Mammary epithelial cell (primary cell): ENCODE measurements at regions of chr10 and their contacts with region 1.

Region 1: DNA sequence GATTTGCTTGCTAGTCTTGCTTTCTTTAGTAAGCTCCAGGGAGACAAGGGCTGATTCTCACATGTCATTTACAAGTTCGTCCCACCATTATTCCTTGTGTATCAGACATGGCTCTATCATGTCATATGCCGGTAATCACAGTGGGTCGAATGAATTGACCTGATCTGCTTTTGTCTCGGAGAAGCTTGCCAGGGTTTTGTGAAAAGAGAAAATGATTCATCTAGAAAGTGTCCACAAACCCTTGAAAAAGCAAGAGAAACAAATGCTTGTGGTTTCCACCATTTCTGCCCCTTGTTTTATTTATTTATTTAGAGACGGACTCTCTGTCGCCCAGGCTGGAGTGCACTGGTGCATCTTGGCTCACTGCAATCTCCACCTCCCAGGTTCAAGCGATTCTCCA is 278.5 kb downstream of the TCF7L2 start:
- DNase-seq: no peak
- H3K4me3 ChIP-seq: no peak overlapping the region
- H3K27ac ChIP-seq: no peak overlapping the region
- H3K4me1 ChIP-seq: no peaks in the 10 kb centered on the region
- H3K27me3 ChIP-seq: no peaks in the 10 kb centered on the region
- CTCF ChIP-seq: no peak

Region 2: DNA sequence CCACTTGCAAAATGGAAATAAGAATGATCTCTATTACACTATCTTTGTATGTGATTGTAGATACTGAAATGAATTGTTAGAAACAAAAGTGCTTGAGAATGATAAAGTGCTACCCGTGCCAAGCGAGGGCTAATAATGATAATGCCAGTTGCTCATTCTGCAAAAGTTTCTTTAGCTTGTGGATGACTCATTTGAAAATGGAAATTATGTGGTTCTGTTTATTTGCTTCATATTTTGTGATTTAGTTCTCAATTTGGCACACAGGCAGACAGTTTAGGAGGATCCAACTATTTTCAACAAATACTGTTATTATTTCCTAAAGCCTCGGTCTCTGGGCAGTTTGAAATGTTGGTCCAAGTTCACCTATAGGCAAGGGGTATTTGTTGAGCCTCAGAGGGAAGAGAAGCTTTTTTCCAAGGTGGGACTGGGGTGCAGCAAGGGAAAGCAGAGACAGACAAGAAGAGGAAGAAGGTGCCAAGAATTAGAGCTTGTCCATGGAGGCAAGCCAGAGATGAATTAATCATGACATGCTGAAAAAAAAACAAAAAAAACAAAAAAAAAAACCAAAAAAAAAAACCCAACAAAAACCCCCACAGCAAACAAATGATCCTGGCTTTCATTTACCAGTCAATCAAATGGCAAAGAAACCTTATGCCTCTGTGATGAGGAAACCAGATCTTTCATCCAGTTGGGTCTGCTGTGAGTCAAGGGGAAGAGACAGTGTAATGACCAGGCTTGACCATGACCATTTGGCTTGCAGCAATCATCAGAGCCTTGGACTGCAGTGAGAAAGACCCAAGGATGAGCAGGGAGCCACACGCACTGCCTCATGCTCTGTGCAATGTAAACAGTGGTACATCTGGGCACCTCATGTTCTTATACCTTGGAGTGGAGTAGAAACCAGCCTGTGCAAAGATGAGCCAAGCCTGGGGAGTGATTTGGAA is 39.4 kb after region 1 on chr10:
- CTCF ChIA-PET with region 1: no interaction called
- dilution Hi-C with region 1: no loop called
- in situ Hi-C with region 1: no loop called
- intact Hi-C with region 1: no loop called
- DNase-seq: no peak
- H3K4me3 ChIP-seq: no peak overlapping the region
- H3K27ac ChIP-seq: no peak overlapping the region
- H3K4me1 ChIP-seq: no peaks in the 10 kb centered on the region
- H3K27me3 ChIP-seq: peaks cover 4% of the 10 kb centered on the region
- CTCF ChIP-seq: no peak

Region 3: GRCh38 chr10:113285305-113285704 is 56.8 kb after region 1 on chr10:
- CTCF ChIA-PET with region 1: no interaction called
- dilution Hi-C with region 1: loop called (anchors 5 kb)
- in situ Hi-C with region 1: no loop called
- intact Hi-C with region 1: no loop called
- DNase-seq: no peak
- H3K4me3 ChIP-seq: no peak overlapping the region
- H3K27ac ChIP-seq: no peak overlapping the region
- H3K4me1 ChIP-seq: no peaks in the 10 kb centered on the region
- H3K27me3 ChIP-seq: peaks cover 2% of the 10 kb centered on the region
- CTCF ChIP-seq: no peak

Region 4: DNA sequence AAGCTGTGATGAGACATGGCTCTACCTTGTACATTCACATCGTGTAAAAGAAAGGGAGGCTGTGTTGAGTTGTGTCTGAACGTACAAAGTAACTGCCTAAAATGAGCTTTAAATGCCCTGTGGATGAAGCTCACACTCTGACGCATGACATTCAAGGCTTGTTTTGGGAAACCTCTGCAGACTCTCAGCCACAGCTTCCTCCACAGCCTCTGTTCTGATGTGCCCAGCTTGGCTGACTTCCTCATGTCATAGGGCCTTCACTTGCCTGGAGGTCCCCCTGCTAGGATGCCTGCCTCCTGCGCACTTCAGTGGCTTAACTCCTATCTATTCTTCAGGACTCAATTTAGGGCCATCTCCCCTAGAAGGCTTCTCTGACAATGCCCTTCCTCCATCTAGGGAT is 94.3 kb after region 1 on chr10:
- CTCF ChIA-PET with region 1: no interaction called
- dilution Hi-C with region 1: no loop called
- in situ Hi-C with region 1: no loop called
- intact Hi-C with region 1: no loop called
- DNase-seq: no peak
- H3K4me3 ChIP-seq: no peak overlapping the region
- H3K27ac ChIP-seq: no peak overlapping the region
- H3K4me1 ChIP-seq: peaks cover 10% of the 10 kb centered on the region
- H3K27me3 ChIP-seq: no peaks in the 10 kb centered on the region
- CTCF ChIP-seq: no peak

Region 5: GRCh38 chr10:113569576-113569975 is 341.0 kb after region 1 on chr10:
- CTCF ChIA-PET with region 1: no interaction called
- dilution Hi-C with region 1: no loop called
- in situ Hi-C with region 1: no loop called
- intact Hi-C with region 1: no loop called
- DNase-seq: no peak
- H3K4me3 ChIP-seq: no peak overlapping the region
- H3K27ac ChIP-seq: no peak overlapping the region
- H3K4me1 ChIP-seq: no peaks in the 10 kb centered on the region
- H3K27me3 ChIP-seq: no peaks in the 10 kb centered on the region
- CTCF ChIP-seq: no peak